Activated CD8-positive, alpha-beta memory T cell treated with anti-CD3 and anti-CD28 coated beads, Interleukin-2, amount 10 ng/mL, durations not matched to agents 7 days and 5 days (primary cell): ENCODE measurements at regions of chr1 and their contacts with region 1.

Region 1: GRCh38 chr1:154669464-154670282 is 61.7 kb upstream of the ADAR start:
- DNase-seq: peak; percentile 81
- ATAC-seq: peak; percentile 100
- H3K4me3 Mint-ChIP-seq: no peak overlapping the region
- H3K27ac Mint-ChIP-seq: no peak overlapping the region
- H3K4me1 Mint-ChIP-seq: peaks cover 5% of the 10 kb centered on the region
- H3K27me3 Mint-ChIP-seq: peaks cover 5% of the 10 kb centered on the region

Region 2: DNA sequence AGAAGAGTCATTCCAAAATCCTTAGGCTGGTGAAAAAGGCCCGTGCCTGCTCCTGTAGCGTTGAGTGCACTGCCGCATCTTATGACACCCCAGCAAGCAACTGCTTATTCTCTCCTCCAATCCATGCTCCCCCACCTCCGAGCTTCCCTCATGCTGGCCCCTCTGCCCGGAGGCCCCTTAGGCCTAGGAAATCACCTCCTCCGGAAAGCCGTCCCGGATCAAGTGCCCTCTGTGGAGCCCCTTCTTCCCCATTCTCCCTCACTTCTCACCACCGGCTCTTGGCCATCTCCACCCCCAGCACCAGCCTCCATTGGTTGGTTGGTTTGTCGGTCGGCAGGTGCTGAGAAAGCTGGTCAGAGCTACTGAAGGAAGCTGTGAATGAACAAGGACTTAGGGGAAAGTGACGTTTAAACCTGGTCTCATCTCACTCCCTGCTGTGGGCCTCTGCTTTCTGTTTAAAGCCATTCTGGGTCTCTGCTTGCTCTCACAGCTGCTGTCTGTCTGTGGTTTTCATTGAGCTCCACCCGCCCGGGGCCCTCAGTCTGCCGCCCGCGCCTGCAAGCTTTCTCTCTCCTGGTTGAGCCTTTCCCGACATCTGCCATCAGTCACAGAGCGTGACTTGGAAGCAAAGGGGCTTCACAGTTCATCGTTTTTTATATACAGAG is 78.2 kb after region 1 on chr1:
- CTCF ChIA-PET with region 1: interaction called, 10 read pairs
- DNase-seq: peak; percentile 82
- ATAC-seq: peak; percentile 81
- H3K4me3 Mint-ChIP-seq: peak overlapping the region; percentile 46
- H3K27ac Mint-ChIP-seq: peak overlapping the region; percentile 76
- H3K4me1 Mint-ChIP-seq: peaks cover 54% of the 10 kb centered on the region
- H3K27me3 Mint-ChIP-seq: peaks cover 81% of the 10 kb centered on the region

Region 3: GRCh38 chr1:154760469-154760933 is 90.8 kb after region 1 on chr1:
- CTCF ChIA-PET with region 1: interaction called, 12 read pairs
- DNase-seq: peak; percentile 84
- ATAC-seq: peak; percentile 95
- H3K4me3 Mint-ChIP-seq: peak overlapping the region; percentile 34
- H3K27ac Mint-ChIP-seq: no peak overlapping the region
- H3K4me1 Mint-ChIP-seq: peaks cover 39% of the 10 kb centered on the region
- H3K27me3 Mint-ChIP-seq: peaks cover 44% of the 10 kb centered on the region

Region 4: DNA sequence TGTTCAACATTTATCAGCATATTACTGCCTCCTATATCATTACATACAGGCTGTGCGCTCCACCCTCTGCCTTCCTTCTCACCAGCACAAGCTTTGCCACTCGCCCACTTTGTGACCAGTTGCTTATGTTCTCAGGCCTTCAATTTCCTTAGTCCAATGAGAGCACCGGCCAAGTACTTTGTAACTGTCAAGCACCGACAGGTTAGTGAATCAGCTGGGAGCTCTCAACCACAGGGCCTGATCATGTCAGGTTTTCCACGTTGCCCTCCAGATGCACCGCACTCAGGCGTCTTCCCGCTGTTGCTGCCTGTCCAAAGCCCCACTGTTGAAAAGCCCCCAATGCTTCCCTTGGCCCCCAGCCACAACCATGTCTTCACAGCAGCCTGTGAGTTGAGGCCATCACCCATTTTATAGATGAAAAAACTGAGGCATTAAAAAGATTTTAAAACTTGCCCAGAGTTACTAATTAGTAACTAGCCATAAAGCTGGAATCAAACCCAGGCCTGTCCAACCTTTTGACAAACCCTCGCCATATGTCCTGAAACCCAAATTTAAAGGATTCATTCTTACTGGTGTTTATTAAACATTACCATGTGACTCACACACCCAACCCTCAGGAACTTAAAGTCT is 203.8 kb after region 1 on chr1:
- CTCF ChIA-PET with region 1: interaction called, 36 read pairs
- DNase-seq: no peak
- ATAC-seq: no peak
- H3K4me3 Mint-ChIP-seq: no peak overlapping the region
- H3K27ac Mint-ChIP-seq: no peak overlapping the region
- H3K4me1 Mint-ChIP-seq: peaks cover 21% of the 10 kb centered on the region
- H3K27me3 Mint-ChIP-seq: peaks cover 59% of the 10 kb centered on the region

Region 5: GRCh38 chr1:154878371-154879022 is 208.8 kb after region 1 on chr1:
- CTCF ChIA-PET with region 1: interaction called, 36 read pairs
- DNase-seq: peak; percentile 79
- ATAC-seq: peak; percentile 97
- H3K4me3 Mint-ChIP-seq: no peak overlapping the region
- H3K27ac Mint-ChIP-seq: no peak overlapping the region
- H3K4me1 Mint-ChIP-seq: peaks cover 4% of the 10 kb centered on the region
- H3K27me3 Mint-ChIP-seq: peaks cover 35% of the 10 kb centered on the region

Region 6: GRCh38 chr1:154943649-154944400 is 274.2 kb after region 1 on chr1:
- CTCF ChIA-PET with region 1: interaction called, 13 read pairs
- DNase-seq: peak; percentile 59
- ATAC-seq: no peak
- H3K4me3 Mint-ChIP-seq: no peak overlapping the region
- H3K27ac Mint-ChIP-seq: peak overlapping the region; percentile 97
- H3K4me1 Mint-ChIP-seq: peaks cover 54% of the 10 kb centered on the region
- H3K27me3 Mint-ChIP-seq: no peaks in the 10 kb centered on the region